Heart left ventricle (tissue), 16 donors: ENCODE measurements at regions of chr6 and their contacts with region 1.

Region 1: DNA sequence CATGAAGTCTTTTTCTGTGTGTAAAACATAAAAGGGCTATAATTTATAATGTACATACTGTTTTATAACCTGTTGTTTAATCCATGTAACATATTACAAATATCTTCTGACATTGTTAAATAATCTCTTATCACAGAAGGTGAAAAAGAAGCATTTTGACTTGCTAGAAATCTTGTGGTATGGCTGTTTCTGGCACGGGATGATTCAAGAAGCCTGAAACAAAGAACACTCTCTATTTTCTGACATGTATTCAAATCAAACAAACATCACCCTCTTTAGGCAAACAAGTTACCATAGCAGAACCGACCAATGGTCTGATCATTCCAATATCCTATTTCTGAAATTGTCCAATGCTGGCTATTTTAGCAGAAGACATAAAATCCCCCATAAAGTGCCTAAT is 55.4 kb downstream of the HS3ST5 start:
- DNase-seq: no peak
- ATAC-seq: no peak
- H3K4me3 ChIP-seq: no peak overlapping the region
- H3K27ac ChIP-seq: no peak overlapping the region
- H3K4me1 ChIP-seq: no peaks in the 10 kb centered on the region
- H3K27me3 ChIP-seq: peaks cover 0 to 2% (median 0%) of the 10 kb centered on the region in 9 donors
- CTCF ChIP-seq: no peak
- POLR2A ChIP-seq: no peak

Region 2: GRCh38 chr6:114202389-114202788 is 85.1 kb before region 1 on chr6:
- intact Hi-C with region 1: no loop called
- DNase-seq: no peak
- ATAC-seq: no peak
- H3K4me3 ChIP-seq: no peak overlapping the region
- H3K27ac ChIP-seq: no peak overlapping the region
- H3K4me1 ChIP-seq: no peaks in the 10 kb centered on the region
- H3K27me3 ChIP-seq: no peaks in the 10 kb centered on the region
- CTCF ChIP-seq: no peak
- POLR2A ChIP-seq: no peak

Region 3: GRCh38 chr6:114240800-114241199 is 46.7 kb before region 1 on chr6:
- intact Hi-C with region 1: no loop called
- DNase-seq: no peak
- ATAC-seq: no peak
- H3K4me3 ChIP-seq: no peak overlapping the region
- H3K27ac ChIP-seq: no peak overlapping the region
- H3K4me1 ChIP-seq: no peaks in the 10 kb centered on the region
- H3K27me3 ChIP-seq: no peaks in the 10 kb centered on the region
- CTCF ChIP-seq: no peak
- POLR2A ChIP-seq: no peak

Region 4: DNA sequence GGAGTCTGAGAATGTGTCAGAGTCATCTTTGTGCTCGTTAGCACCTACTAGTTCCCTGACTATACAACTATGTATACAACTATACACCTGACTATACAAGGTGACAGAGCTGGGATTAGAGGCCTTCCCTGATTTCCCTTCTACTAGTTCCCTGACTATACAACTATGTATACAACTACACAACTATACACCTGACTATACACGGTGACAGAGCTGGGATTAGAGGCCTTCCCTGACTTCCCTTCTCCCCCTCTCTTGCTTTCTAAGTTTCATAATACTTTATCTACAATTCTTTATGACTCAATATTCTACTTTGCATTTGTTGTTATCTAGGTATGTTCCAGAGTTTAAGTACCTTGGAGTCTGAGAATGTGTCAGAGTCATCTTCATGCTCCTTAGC is 12.6 kb before region 1 on chr6:
- intact Hi-C with region 1: loop called in 1 of 10 experiments (anchors 1 kb)
- DNase-seq: no peak
- ATAC-seq: no peak
- H3K4me3 ChIP-seq: no peak overlapping the region
- H3K27ac ChIP-seq: no peak overlapping the region
- H3K4me1 ChIP-seq: no peaks in the 10 kb centered on the region
- H3K27me3 ChIP-seq: no peaks in the 10 kb centered on the region
- CTCF ChIP-seq: no peak
- POLR2A ChIP-seq: no peak

Region 5: GRCh38 chr6:114432380-114432779 is 144.9 kb after region 1 on chr6:
- intact Hi-C with region 1: no loop called
- DNase-seq: no peak
- ATAC-seq: no peak
- H3K4me3 ChIP-seq: no peak overlapping the region
- H3K27ac ChIP-seq: no peak overlapping the region
- H3K4me1 ChIP-seq: no peaks in the 10 kb centered on the region
- H3K27me3 ChIP-seq: no peaks in the 10 kb centered on the region
- CTCF ChIP-seq: no peak
- POLR2A ChIP-seq: no peak